ENCODE measurements at regions of chr3 and their contacts with region 1.

Region 1: GRCh38 chr3:39150799-39151631 is 2.4 kb downstream of the CSRNP1 start:
- DNase-seq: peak; percentile 87
- ATAC-seq: peak; percentile 16

Region 2: GRCh38 chr3:39180546-39181346 is 29.7 kb after region 1 on chr3:
- intact Hi-C with region 1: loop called (anchors 2 kb)
- DNase-seq: peak; percentile 96
- ATAC-seq: peak; percentile 87

Measured in Right ventricle myocardium superior (tissue), 1 donor.